OCI-LY7 (cell line): ENCODE measurements at regions of chr19 and their contacts with region 1.

Region 1: DNA sequence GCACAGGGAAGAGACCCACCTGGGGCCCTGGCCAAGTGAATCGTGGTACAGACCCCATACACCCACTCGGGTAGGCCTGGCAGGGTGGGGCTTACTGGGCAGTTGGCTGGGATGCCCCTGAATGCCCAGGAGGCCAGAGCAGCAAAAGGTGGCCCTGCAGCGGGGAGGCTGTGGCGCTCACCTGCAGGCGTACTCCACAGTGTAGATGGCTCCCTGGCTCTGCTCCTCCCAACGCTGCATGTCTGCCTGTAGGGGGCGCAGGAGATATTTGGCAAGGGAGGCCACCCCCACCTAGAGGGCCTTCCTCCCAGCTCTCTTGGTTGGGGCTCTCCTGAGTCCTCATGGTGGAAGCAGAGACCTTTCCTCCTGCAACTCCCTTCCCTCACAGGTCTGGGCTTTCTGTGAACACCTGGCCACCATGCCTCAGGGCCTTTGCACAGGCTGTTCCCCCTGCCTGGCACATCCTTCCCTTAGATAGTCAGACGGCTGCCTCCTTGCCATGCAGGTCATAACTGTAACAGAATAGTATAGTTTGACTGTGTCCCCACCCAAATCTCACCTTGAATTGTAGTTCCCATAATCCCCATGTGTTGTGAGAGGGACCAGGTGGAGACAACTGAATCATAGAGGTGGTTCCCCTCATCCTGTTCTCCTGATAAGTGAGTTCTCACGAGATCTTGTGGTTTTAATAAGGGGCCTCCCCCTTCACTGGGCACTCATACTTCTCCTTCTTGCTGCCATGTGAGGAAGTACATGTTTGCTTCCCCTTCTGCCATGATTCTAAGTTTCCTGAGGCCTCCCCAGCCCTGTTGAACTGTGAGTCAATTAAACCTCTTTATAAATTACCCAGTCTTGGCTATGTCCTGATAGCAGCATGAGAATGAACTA is 5.9 kb downstream of the BORCS8 start:
- DNase-seq: peak; percentile 64
- H3K4me3 ChIP-seq: no peak overlapping the region
- H3K27ac ChIP-seq: no peak overlapping the region
- H3K4me1 ChIP-seq: peaks cover 12% of the 10 kb centered on the region
- CTCF ChIP-seq: peak; percentile 80

Region 2: DNA sequence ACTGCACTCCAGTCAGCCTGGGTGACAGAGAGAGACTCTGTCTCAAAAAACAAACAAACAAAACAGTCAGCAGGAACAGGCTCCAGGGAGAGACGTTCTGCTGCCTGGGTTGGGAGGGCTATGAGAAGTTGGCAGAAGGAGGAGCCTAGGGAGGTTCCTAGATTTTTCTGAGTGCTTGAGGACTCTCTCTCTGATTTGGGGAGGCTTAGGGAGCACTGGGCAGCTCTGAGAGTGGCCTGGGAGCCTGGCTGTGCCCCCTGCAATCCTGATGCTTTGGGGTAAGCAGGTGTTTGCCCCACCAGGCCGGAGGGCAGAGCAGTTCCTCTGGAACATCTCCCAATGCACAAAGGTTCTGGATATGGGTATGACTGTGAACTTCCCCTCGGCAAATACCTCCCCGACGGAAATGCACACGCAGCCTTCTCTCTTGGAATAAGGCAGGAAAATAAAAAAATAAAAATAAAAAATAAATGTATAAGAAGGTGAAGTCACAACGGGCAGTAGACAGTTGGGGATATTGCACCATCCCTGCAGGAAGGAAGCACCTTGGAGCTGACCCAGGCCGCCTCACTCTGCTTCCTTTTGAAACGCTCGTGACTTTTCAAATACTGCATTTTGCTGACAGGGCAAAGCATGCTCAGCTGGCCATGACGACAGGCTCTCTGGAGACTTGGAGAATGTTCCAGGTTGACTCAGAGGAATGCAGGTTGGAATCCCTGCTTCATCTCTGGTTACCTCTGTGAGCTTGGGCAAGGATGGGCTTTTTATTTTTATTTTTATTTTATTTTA is 218.5 kb before region 1 on chr19:
- CTCF ChIA-PET with region 1: no interaction called
- POLR2A ChIA-PET with region 1: no interaction called
- intact Hi-C with region 1: no loop called
- DNase-seq: no peak
- H3K4me3 ChIP-seq: no peak overlapping the region
- H3K27ac ChIP-seq: no peak overlapping the region
- H3K4me1 ChIP-seq: peaks cover 6% of the 10 kb centered on the region
- CTCF ChIP-seq: no peak

Region 3: GRCh38 chr19:18978616-18979015 is 207.5 kb before region 1 on chr19:
- CTCF ChIA-PET with region 1: no interaction called
- POLR2A ChIA-PET with region 1: no interaction called
- intact Hi-C with region 1: no loop called
- DNase-seq: no peak
- H3K4me3 ChIP-seq: no peak overlapping the region
- H3K27ac ChIP-seq: no peak overlapping the region
- H3K4me1 ChIP-seq: no peaks in the 10 kb centered on the region
- CTCF ChIP-seq: no peak

Region 4: DNA sequence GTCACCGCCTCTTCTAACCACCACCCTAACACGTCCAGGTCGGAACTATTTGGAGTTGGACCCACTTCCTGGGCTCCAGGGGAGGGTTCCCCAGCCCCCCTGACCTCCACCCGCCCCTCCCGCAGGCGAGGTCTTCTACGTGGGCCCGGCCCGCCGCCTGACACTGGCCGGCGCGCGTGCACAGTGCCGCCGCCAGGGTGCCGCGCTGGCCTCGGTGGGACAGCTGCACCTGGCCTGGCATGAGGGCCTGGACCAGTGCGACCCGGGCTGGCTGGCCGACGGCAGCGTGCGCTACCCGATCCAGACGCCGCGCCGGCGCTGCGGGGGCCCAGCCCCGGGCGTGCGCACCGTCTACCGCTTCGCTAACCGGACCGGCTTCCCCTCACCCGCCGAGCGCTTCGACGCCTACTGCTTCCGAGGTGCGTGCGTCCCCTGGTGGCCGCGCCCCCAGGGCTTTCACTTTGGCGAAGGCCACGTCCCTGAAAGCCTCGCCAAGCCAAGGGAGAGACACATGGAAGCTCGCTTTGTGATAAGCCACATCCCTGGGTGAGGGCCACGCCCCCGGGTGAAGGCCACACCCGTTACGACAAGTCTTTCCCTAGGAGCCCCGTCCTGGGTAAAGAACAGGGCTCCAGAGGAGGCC is 38.9 kb after region 1 on chr19:
- CTCF ChIA-PET with region 1: no interaction called
- POLR2A ChIA-PET with region 1: no interaction called
- intact Hi-C with region 1: loop called (anchors 1 kb)
- DNase-seq: no peak
- H3K4me3 ChIP-seq: no peak overlapping the region
- H3K27ac ChIP-seq: no peak overlapping the region
- H3K4me1 ChIP-seq: no peaks in the 10 kb centered on the region
- CTCF ChIP-seq: peak; percentile 40; the same call in 1 of the 2 replicates